Panc1 (cell line): ENCODE measurements at regions of chr2 and their contacts with region 1.

Region 1: GRCh38 chr2:197777823-197778407 is 7.2 kb downstream of the BOLL start:
- DNase-seq: peak; percentile 10
- ATAC-seq: no peak
- H3K4me3 ChIP-seq: no peak overlapping the region
- H3K27ac ChIP-seq: no peak overlapping the region
- H3K4me1 ChIP-seq: no peaks in the 10 kb centered on the region
- H3K27me3 ChIP-seq: no peaks in the 10 kb centered on the region; the same call in 1 of the 2 replicates
- CTCF ChIP-seq: peak; percentile 57; the same call in 1 of the 2 replicates

Region 2: GRCh38 chr2:197383823-197384222 is 394.1 kb before region 1 on chr2:
- CTCF ChIA-PET with region 1: no interaction called
- POLR2A ChIA-PET with region 1: no interaction called
- in situ Hi-C with region 1: no loop called
- intact Hi-C with region 1: loop called (anchors 5 kb)
- DNase-seq: no peak
- ATAC-seq: 0 out of 2 replicates have a peak, but pooled peaks have one; percentile 42
- H3K4me3 ChIP-seq: no peak overlapping the region
- H3K27ac ChIP-seq: no peak overlapping the region
- H3K4me1 ChIP-seq: no peaks in the 10 kb centered on the region
- H3K27me3 ChIP-seq: no peaks in the 10 kb centered on the region
- CTCF ChIP-seq: peak; percentile 33

Region 3: DNA sequence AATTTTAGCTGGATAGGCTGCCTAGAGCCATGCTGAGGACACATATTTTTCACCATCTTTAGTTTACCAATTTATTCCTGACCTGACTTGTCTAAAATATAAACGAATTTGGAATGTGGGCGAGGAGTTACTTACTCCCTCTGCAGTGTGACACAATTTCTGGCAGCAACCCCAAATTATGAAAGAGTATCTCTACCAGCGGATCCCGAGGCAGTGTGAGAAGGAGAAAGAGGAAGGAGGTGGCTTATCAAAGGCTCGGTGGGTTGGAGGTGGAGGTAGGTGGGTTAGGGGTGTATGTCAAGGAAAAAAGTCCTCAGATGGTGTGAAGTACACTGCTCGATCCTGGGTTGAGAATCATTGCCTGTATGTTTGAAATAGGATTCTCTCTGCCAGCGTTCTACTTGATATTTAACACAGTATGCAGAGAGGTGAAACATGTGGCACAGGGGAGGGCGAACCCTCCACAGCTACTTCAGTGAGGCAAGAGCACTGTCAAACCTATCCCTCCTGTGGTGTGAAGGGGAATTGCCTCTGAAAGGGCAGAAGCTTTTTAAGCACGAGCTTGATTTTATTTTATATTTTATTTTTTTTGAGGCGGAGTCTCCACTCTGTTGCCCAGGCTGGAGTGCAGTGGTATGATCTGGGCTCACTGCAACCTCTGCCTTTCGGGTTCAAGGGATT is 178.5 kb before region 1 on chr2:
- CTCF ChIA-PET with region 1: no interaction called
- POLR2A ChIA-PET with region 1: no interaction called
- in situ Hi-C with region 1: no loop called
- intact Hi-C with region 1: loop called (anchors 10 kb)
- DNase-seq: no peak
- ATAC-seq: peak; percentile 86
- H3K4me3 ChIP-seq: no peak overlapping the region
- H3K27ac ChIP-seq: no peak overlapping the region
- H3K4me1 ChIP-seq: no peaks in the 10 kb centered on the region
- H3K27me3 ChIP-seq: peaks cover 4% of the 10 kb centered on the region; the same call in 1 of the 2 replicates
- CTCF ChIP-seq: peak; percentile 56

Region 4: DNA sequence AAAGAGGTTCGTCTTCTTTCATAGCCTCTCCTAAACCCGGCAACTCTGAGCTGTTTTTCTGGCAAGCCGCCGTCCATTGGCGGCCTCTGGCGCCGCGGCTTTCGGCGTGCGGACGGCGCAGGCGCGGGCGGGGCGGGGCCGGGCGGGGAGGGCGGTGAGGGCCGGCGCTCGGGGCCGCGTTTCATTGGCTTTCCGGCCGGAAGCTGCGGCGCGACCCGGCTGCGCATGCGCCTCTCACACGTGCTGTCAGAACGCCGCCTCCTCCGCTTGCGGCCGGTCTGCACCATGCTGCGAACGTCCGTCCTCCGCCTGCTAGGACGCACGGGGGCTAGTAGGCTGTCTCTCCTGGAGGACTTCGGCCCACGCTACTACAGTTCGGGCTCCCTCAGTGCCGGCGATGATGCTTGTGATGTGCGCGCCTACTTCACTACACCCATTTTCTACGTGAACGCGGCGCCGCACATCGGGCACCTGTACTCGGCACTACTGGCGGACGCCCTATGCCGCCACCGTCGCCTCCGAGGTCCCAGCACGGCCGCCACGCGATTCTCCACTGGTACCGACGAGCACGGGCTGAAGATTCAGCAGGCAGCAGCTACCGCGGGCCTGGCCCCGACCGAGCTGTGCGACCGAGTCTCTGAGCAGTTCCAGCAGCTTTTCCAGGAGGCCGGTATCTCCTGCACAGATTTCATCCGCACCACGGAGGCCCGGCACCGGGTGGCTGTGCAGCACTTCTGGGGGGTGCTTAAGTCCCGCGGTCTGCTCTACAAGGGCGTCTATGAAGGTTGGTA is 72.6 kb before region 1 on chr2 and contains the start of gene MARS2:
- CTCF ChIA-PET with region 1: no interaction called
- POLR2A ChIA-PET with region 1: no interaction called
- in situ Hi-C with region 1: no loop called
- intact Hi-C with region 1: loop called (anchors 2 kb)
- DNase-seq: peak; percentile 43
- ATAC-seq: peak; percentile 92
- H3K4me3 ChIP-seq: peak within 1 kb of the TSS; percentile 76 to 94
- H3K27ac ChIP-seq: peak within 1 kb of the TSS; percentile 99
- H3K4me1 ChIP-seq: peaks cover 15% of the 10 kb centered on the region
- H3K27me3 ChIP-seq: no peaks in the 10 kb centered on the region
- CTCF ChIP-seq: no peak
- total RNA-seq, gene MARS2: 8.7 TPM

Region 5: GRCh38 chr2:197889041-197889440 is 111.1 kb after region 1 on chr2:
- CTCF ChIA-PET with region 1: no interaction called
- POLR2A ChIA-PET with region 1: no interaction called
- in situ Hi-C with region 1: no loop called
- intact Hi-C with region 1: no loop called
- DNase-seq: no peak
- ATAC-seq: no peak
- H3K4me3 ChIP-seq: no peak overlapping the region
- H3K27ac ChIP-seq: no peak overlapping the region
- H3K4me1 ChIP-seq: no peaks in the 10 kb centered on the region
- H3K27me3 ChIP-seq: no peaks in the 10 kb centered on the region
- CTCF ChIP-seq: no peak

Region 6: DNA sequence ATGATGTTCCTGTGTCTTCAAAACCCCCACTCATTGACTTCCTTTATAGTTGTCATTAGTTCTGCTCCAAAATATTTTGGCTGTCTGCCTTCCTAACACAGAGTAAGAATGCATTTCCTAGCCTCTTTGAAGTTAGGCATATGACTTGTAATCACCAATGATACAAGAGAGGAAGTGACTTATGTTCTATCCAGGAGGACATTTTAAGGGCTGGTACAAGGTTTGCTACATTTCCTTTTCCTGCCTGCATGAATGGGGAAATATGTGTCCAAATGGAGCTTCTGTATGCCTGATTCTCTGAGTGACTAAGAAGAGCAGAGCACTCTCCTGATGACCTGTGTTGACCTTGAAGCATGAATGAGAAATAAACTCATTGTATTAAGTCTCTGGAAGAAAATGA is 141.6 kb after region 1 on chr2:
- CTCF ChIA-PET with region 1: no interaction called
- POLR2A ChIA-PET with region 1: no interaction called
- in situ Hi-C with region 1: no loop called
- intact Hi-C with region 1: no loop called
- DNase-seq: no peak
- ATAC-seq: no peak
- H3K4me3 ChIP-seq: no peak overlapping the region
- H3K27ac ChIP-seq: no peak overlapping the region
- H3K4me1 ChIP-seq: no peaks in the 10 kb centered on the region
- H3K27me3 ChIP-seq: peaks cover 2% of the 10 kb centered on the region; the same call in 1 of the 2 replicates
- CTCF ChIP-seq: no peak